Ascending aorta (tissue), 2 donors: ENCODE measurements at regions of chr11 and their contacts with region 1.

Region 1: GRCh38 chr11:10307442-10308207 is 2.8 kb downstream of the ADM start:
- DNase-seq: peak in 1 of 2 donors; percentile 91
- H3K4me3 ChIP-seq: peak overlapping the region; percentile 69 to 85
- H3K27ac ChIP-seq: peak overlapping the region; percentile 70 to 76
- H3K4me1 ChIP-seq: peaks cover 0 to 32% of the 10 kb centered on the region in 2 donors
- H3K27me3 ChIP-seq: no peaks in the 10 kb centered on the region
- CTCF ChIP-seq: peak; percentile 99 to 100 (median 99)

Region 2: DNA sequence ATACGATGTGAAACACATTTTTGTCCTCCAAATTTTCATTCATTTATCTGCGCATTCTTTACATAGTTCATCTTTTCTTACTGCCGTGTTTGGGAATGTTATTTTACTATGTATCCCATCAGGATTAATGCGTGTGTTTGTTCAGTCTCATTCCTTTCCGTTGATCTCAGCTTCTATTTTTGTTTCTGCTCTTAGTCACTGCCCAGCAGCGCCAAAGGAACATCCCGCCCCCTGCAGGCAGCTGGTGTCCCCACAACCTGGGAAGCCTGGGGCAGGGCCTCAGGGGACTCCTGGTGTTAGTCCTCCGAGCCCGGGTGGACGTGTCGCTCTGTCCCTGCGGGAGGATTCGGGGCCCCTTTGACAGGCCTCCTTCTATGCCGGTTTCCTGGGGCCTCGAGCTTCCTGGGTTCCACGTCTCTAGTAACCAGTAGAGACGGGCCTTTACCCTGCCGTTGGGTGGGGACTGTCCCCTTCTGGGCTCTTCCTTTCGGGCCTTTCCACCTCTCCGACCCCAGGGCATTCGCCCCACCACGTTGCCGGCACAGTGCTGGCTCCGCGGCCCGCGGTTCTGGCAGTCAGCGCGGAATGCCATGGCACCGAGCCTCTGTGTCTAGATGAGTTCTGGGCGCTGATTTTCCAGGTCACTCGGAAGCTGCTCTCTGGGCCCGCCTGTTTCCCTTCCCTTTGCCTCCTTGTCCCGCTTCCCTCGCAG is 694.4 kb before region 1 on chr11:
- intact Hi-C with region 1: loop called (anchors 5 kb)
- DNase-seq: peak; percentile 79 to 97
- H3K4me3 ChIP-seq: peak overlapping the region; percentile 68 to 73
- H3K27ac ChIP-seq: peak overlapping the region; percentile 98 to 99
- H3K4me1 ChIP-seq: peaks cover 2 to 23% of the 10 kb centered on the region in 2 donors
- H3K27me3 ChIP-seq: no peaks in the 10 kb centered on the region
- CTCF ChIP-seq: peak; percentile 91 to 95 (median 92)

Region 3: GRCh38 chr11:9861860-9862725 is 445.5 kb before region 1 on chr11:
- intact Hi-C with region 1: loop called (anchors 10 kb)
- DNase-seq: no peak
- H3K4me3 ChIP-seq: no peak overlapping the region
- H3K27ac ChIP-seq: no peak overlapping the region
- H3K4me1 ChIP-seq: no peaks in the 10 kb centered on the region
- H3K27me3 ChIP-seq: no peaks in the 10 kb centered on the region
- CTCF ChIP-seq: peak; percentile 40 to 59 (median 45)

Region 4: GRCh38 chr11:10208131-10208575 is 99.5 kb before region 1 on chr11:
- intact Hi-C with region 1: loop called (anchors 1 kb)
- DNase-seq: no peak
- H3K4me3 ChIP-seq: no peak overlapping the region
- H3K27ac ChIP-seq: no peak overlapping the region
- H3K4me1 ChIP-seq: no peaks in the 10 kb centered on the region
- H3K27me3 ChIP-seq: no peaks in the 10 kb centered on the region
- CTCF ChIP-seq: peak; percentile 58 to 74 (median 60)

Region 5: DNA sequence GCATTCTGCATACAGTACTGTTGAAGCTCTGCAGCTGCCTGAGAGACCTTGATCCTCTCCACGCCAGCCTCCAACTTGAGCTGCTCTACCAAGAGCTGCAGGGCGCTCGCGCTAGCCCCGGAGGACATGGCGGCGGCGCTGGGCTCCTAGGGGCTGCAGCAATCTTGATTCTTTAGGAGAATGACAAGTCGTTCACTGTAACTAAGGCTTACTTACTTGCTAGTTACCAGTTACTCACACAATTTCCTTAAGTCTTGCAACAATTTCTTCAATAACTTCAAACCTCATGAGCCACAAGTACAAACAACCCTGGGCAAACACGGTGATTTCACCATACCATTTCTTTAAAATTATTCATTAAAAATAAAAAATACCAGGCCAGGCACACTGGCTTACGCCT is 35.5 kb before region 1 on chr11:
- intact Hi-C with region 1: no loop called
- DNase-seq: no peak
- H3K4me3 ChIP-seq: no peak overlapping the region
- H3K27ac ChIP-seq: no peak overlapping the region
- H3K4me1 ChIP-seq: peaks cover 0 to 8% of the 10 kb centered on the region in 2 donors
- H3K27me3 ChIP-seq: no peaks in the 10 kb centered on the region
- CTCF ChIP-seq: no peak

Region 6: DNA sequence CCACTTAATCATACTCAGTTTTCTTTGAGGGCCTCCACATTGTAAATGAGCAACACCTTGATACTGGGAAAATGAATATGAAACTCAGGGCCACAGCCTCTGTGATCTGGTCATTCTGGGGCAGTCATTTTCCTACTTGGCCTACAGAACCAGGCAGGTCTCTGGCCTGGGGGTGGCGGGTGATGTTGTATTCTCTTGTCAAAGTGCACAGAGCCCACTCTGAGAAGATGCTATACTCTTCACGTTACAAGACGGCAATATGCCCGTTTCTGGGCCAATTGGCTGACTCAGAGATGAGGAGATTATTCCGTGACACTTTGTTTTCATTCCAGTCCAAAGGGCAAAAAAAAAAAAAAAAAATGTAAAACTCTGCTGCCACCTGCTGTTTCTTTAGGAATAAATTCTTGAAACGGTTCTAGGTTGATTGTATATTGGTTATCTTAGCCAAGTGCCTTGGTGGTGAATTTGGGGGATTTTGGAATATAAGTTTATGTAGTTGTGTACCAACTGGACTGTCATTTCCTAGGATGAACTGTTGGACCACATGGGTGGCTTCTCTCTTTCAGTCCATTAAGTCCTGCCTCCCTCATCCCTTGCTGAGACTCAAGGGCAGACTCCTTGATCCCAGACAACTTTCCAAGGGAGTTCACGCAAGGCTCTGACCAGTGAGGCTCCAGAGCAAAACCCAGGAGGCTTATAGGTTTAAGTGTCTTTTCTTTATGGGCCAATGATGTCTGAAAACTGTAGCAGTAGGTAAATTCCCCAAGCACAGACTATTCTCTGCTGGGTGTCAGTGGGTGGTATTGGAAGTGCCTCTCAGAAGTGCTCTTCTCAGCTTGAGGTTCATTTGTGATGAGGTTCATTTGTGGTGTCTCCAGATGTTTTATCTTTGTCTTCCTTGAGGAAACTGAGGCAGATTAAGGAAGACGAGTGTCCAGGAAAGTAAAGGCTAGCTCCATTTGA is 15.5 kb after region 1 on chr11:
- intact Hi-C with region 1: loop called (anchors 1 kb)
- DNase-seq: peak in 1 of 2 donors; percentile 88
- H3K4me3 ChIP-seq: peak overlapping the region in 1 of 2 donors; percentile 33
- H3K27ac ChIP-seq: peak overlapping the region; percentile 79 to 86
- H3K4me1 ChIP-seq: peaks cover 10 to 55% of the 10 kb centered on the region in 2 donors
- H3K27me3 ChIP-seq: no peaks in the 10 kb centered on the region
- CTCF ChIP-seq: peak; percentile 42 to 57 (median 56)

Region 7: GRCh38 chr11:10338287-10338686 is 30.7 kb after region 1 on chr11:
- intact Hi-C with region 1: no loop called
- DNase-seq: no peak
- H3K4me3 ChIP-seq: no peak overlapping the region
- H3K27ac ChIP-seq: no peak overlapping the region
- H3K4me1 ChIP-seq: no peaks in the 10 kb centered on the region
- H3K27me3 ChIP-seq: no peaks in the 10 kb centered on the region
- CTCF ChIP-seq: no peak

Region 8: DNA sequence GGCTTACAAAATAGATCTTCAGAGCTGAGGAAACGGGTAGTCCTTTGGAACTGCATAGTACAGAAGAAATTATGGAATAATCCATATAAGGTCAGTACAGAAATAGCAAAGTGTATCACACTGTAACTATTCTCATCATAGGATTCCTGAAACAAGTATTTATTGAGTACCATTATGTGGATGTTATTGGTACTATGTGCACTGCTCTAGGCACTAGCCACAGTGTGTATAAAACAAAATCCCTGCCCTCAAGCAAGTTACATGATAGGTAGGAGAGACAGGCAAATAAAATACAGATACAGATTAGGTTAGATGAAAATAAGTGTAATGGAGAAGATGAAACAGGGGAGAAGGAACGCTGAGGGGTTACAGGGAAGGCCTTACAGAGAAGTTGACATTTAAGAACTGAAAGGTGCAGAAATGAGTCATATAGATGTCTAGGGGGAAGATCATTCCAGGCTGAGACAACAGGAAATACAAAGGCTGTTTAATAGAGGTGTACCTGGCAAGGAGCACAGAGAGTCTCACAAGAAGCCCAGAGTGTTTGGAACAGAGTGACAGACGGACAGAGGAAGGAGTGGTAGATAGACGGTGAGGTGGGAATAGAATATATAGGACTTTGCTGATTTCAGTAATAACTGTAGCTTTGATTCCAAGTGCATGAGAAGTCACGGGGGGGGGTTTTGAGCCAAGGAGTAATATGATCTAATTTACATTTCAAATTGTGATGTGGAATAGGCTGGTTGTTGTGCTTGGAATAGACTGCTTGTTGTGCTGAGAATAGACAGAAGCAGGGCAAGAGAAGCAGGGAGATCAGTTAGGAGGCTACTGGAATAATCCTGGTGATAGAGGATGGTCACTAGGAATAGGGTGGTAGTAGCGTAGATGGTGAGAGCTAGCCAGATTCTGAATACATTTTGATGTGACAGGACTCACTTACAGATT is 219.6 kb after region 1 on chr11:
- intact Hi-C with region 1: loop called (anchors 5 kb)
- DNase-seq: no peak
- H3K4me3 ChIP-seq: no peak overlapping the region
- H3K27ac ChIP-seq: peak overlapping the region; percentile 62 to 80
- H3K4me1 ChIP-seq: peaks cover 10 to 33% of the 10 kb centered on the region in 2 donors
- H3K27me3 ChIP-seq: no peaks in the 10 kb centered on the region
- CTCF ChIP-seq: no peak

Region 9: DNA sequence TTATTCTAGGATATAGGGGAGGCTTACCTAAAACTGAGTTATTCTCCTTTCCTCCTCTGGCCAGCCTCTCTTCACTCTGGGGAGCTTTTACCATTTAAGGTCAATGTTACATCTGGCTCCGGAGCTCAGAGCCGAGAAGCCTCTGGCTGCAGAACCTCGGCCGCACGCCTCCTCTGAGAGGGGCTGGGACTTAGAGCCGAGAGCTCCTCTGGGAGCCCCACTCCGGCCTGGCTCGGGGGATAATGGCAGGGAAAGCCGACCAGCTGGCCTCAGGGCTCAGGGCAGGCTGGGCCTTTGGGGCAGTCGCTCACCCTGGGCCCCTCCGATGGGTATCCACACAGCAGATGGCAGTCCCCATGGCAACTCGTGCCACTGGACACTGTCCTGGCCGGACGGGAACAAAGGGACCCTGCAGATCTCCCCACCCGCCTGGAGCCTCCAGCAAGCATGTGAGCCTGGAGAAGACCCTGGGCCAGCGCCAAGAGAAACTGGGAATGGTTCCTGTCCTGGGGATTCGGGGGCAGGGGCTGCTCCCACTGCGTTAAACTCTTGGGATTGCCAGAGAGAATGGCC is 386.0 kb after region 1 on chr11 and contains the start of gene IRAG1:
- intact Hi-C with region 1: no loop called
- DNase-seq: peak in 1 of 2 donors; percentile 92
- H3K4me3 ChIP-seq: peak within 1 kb of the TSS; percentile 66 to 87
- H3K27ac ChIP-seq: peak within 1 kb of the TSS; percentile 99
- H3K4me1 ChIP-seq: peaks cover 15 to 48% of the 10 kb centered on the region in 2 donors
- H3K27me3 ChIP-seq: no peaks in the 10 kb centered on the region
- CTCF ChIP-seq: no peak
- total RNA-seq, gene IRAG1: 236 TPM